Testis (tissue), 5 donors: ENCODE measurements at regions of chr2 and their contacts with region 1.

Region 1: DNA sequence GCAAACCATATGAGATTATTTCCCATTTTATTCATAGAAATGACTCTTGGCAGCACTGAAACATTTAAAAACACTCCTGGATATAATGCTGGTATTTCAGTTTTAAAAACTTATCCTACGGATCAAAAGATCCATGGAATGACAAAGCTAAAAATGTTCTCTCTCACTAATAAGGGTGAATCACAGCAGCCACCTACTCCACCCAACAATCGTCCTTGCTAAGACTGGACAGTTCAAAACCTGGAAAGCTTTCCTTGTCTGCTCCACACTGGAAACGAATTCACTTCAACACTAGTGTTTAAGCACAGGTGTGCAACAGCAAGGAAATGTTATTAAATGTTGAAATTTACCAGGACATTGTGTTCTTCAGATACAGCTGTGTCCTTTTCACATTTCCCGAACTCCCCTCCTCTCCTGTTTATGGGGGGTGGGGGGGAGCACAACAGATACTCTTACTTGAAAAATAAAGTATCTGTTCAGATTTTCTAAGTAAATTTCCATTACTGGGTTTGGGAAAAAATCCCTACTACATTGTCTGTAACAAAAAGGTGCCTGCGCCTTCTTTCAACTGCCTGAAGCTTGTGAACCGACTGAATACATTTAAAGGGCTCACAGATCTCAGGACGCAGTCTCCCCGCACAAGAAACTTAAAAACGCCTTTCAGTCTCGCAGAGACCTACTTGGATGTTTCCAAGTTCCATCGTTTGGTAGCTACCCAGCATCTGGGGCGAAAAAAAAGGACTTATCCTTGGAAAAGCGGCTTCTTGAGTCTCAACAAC is 1.4 kb downstream of the YWHAQ start:
- DNase-seq: no peak
- H3K4me3 ChIP-seq: peak overlapping the region; percentile 80 to 89
- H3K27ac ChIP-seq: peak overlapping the region; percentile 94 to 97
- H3K4me1 ChIP-seq: peaks cover 30% of the 10 kb centered on the region
- H3K27me3 ChIP-seq: no peaks in the 10 kb centered on the region
- CTCF ChIP-seq: no peak
- POLR2A ChIP-seq: no peak

Region 2: DNA sequence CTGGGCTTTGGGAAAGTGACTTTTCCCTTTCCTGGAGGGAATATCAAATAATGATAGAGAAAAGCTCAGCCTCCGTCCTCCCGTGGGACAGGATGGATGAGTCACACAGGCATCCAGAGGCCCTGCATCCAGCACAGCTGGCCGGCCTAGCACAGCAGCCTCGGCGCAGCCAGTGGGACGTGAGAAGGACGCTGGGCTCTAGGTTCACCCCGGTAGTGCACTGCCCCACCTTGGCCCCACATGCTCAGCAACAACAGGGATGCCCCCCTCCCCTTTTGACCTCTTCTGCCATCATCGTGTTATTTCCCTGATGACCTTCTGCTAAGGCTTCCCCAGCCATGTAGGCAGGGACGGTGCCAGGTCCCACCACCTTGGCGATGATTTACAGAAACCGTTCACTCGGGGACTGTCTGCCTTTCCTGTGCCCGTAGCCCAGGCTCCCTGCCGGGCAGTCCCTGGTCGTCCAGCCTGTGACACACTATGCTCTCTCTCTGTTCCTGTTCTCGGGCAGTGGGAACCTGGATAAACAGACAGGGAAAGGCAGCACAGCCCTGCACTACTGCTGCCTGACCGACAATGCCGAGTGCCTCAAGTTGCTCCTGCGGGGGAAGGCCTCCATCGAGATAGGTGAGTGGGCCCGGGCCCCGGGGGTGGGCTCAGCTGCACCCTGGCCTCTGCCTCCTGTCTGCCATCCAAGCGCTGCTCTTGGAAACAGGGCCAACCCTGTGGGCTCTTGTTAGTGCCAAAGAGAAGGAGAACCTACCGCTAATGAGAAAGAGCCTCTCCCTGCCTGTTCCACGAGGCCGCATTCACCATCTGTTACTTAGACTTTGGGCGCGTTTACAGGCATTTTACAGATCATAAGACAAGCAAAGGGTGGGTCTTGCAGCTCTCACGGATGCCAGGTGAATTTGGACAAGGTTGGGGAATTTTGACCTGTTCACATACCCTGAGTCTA is 250.7 kb before region 1 on chr2:
- intact Hi-C with region 1: no loop called
- DNase-seq: peak; percentile 31
- H3K4me3 ChIP-seq: no peak overlapping the region
- H3K27ac ChIP-seq: no peak overlapping the region
- H3K4me1 ChIP-seq: no peaks in the 10 kb centered on the region
- H3K27me3 ChIP-seq: no peaks in the 10 kb centered on the region
- CTCF ChIP-seq: no peak
- POLR2A ChIP-seq: no peak

Region 3: DNA sequence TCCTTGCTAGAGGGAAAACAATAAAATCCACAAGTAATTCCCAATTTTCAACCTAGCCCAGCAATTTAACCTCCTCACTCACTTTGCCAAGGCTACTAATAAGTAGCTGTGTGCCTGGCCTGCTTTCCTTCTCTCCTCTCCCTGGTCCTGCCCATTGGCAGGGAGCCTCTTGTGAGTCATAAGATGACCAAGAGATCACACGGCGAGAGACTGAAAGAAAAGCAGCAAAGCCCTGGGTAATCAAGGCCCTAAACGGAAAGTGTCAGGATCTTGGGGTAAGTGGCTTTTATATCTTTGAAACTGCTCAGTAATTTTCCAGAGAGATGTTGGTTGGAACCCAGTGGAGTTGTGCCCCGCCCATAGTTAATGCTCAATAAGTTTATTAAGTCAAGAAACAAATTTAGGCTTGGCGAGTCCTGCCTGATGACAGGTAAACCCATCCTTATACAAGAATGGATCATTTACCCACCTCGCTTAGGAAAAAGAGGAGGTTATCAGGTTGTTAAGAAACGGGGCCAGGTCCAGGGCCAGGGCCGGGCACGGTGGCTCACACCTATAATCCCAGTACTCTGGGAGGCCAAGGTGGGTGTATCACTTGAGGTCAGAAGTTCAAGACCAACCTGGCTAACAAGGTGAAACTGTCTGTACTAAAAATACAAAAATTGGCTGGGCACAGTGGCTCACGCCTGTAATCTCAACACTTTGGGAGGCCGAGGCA is 63.8 kb before region 1 on chr2:
- intact Hi-C with region 1: loop called (anchors 10 kb)
- DNase-seq: peak; percentile 89
- H3K4me3 ChIP-seq: no peak overlapping the region
- H3K27ac ChIP-seq: peak overlapping the region; percentile 51 to 82
- H3K4me1 ChIP-seq: peaks cover 5% of the 10 kb centered on the region
- H3K27me3 ChIP-seq: no peaks in the 10 kb centered on the region
- CTCF ChIP-seq: no peak
- POLR2A ChIP-seq: no peak

Region 4: DNA sequence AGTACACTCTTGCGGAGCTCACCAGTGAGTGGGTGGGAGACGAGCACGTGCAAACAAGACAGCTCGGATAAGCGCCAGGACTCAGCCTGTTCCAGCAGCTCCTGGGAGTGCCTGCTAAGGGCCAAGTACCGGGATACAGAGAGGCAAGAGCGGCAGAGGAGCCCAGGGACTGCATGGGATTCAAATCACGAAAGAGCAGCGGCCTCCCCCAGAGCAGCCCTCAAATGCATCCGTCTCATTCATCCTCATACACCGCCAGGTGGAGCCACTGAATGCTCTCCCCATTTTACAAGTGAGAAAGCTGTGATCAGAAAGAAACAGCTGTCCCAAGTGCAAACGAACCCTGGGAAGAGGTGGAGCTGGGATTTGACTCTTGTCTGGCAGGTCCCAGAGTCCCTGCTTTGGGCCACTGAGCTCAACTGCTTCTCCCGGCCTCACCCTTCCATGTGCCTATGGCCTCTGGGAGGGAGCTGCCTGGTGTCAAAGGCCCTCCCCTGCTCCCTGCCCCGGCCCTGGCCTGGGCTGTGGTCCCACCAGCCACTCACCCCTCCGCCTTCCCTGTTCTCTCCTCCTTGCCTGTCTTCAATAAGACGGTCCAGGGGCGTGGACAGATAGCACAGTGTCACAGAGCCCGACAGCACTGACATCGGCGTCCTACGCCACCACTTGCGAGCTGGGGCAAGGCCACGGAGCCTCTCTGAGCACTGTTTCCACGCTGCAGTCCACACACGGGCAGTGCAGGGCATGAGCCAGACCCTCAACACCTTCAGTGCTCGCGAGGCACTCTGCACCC is 141.1 kb after region 1 on chr2:
- intact Hi-C with region 1: no loop called
- DNase-seq: peak; percentile 84
- H3K4me3 ChIP-seq: no peak overlapping the region
- H3K27ac ChIP-seq: peak overlapping the region in 1 of 2 donors; percentile 30
- H3K4me1 ChIP-seq: peaks cover 30% of the 10 kb centered on the region
- H3K27me3 ChIP-seq: no peaks in the 10 kb centered on the region
- CTCF ChIP-seq: peak in 2 of 3 experiments; percentile 57
- POLR2A ChIP-seq: no peak